B cell (primary cell): ENCODE measurements at regions of chr1 and their contacts with region 1.

Region 1: DNA sequence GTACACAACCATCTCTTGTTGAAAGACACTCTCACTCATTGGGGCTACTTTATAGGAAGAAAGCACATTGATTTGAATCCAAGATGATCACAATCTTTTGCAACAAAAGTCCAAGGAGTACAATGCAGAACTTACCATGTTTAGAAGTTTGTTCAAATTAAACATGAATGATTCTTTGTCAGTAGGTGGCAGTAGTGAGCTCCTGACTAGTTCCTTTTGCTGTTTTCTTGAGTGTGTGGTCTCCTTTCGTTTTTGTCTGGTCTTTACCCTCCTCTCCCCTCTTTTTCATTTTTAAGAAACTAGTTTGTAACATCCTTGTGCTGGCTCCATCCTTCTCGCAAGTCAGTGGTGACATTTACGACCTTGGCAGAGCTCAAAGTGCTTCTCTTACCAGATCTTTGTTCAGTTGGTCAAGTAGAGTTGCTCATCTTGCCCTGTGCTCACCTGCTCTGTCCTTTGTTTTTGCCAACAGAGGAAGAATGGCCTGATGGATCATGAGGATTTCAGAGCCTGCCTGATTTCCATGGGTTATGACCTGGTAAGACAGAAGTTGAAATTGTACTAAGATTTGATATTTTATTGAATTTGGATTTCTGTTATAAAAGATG is 35.7 kb upstream of the MTR start:
- DNase-seq: peak; percentile 59
- ATAC-seq: no peak
- H3K4me3 ChIP-seq: no peak overlapping the region
- H3K4me3 Mint-ChIP-seq: no peak overlapping the region
- H3K27ac ChIP-seq: no peak overlapping the region
- H3K27ac Mint-ChIP-seq: no peak overlapping the region
- H3K4me1 ChIP-seq: no peaks in the 10 kb centered on the region
- H3K4me1 Mint-ChIP-seq: peaks cover 2% of the 10 kb centered on the region
- H3K27me3 ChIP-seq: no peaks in the 10 kb centered on the region
- H3K27me3 Mint-ChIP-seq: peaks cover 3% of the 10 kb centered on the region
- CTCF ChIP-seq: peak; percentile 81

Region 2: DNA sequence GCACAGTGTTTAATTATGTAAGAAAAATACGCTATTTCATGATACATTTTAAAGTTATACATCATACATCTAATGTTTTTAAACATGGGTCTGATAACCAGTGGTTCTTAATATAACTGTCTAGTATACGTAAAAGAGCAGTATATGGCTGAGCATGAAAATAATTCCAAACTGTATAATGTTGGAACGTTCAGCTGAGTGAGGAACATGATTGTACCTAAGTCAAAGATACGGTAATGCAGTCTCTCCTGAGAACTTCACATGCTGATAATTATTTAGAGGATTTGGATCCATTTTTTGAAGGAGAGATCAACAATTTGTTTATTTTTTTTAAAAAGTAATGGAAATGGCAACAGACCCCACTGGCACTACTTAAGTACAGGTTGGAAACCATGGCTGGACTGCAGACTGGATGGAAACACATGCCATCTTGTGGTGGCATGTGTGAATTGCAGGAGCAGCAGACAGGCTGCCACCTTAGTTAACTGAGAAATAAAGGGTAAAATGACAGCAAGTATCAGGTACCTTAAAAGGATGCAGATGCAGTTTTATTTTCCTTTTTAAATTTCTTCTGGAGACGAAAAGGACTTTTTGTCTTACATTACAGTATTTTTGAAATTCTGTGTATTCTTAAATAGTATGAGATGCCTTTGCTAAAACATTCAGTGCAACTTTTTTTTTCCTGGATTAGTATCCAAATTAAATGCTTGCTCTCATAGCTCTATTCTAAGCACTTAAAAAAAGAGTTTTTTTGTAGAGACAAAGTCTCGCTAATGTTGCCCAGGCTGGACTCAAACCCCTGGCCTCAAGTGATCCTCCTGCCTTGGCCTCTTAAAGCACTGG is 109.5 kb after region 1 on chr1:
- CTCF ChIA-PET with region 1: interaction called, 12 read pairs
- POLR2A ChIA-PET with region 1: no interaction called
- intact Hi-C with region 1: loop called (anchors 2 kb)
- DNase-seq: peak; percentile 60
- ATAC-seq: peak; percentile 24
- H3K4me3 ChIP-seq: no peak overlapping the region
- H3K4me3 Mint-ChIP-seq: no peak overlapping the region
- H3K27ac ChIP-seq: no peak overlapping the region
- H3K27ac Mint-ChIP-seq: no peak overlapping the region
- H3K4me1 ChIP-seq: no peaks in the 10 kb centered on the region
- H3K4me1 Mint-ChIP-seq: no peaks in the 10 kb centered on the region
- H3K27me3 ChIP-seq: no peaks in the 10 kb centered on the region
- H3K27me3 Mint-ChIP-seq: no peaks in the 10 kb centered on the region
- CTCF ChIP-seq: peak; percentile 94

Region 3: GRCh38 chr1:237562242-237562823 is 803.0 kb after region 1 on chr1:
- CTCF ChIA-PET with region 1: interaction called, 12 read pairs
- POLR2A ChIA-PET with region 1: no interaction called
- intact Hi-C with region 1: no loop called
- DNase-seq: peak; percentile 50
- ATAC-seq: no peak
- H3K4me3 ChIP-seq: no peak overlapping the region
- H3K4me3 Mint-ChIP-seq: no peak overlapping the region
- H3K27ac ChIP-seq: no peak overlapping the region
- H3K27ac Mint-ChIP-seq: no peak overlapping the region
- H3K4me1 ChIP-seq: no peaks in the 10 kb centered on the region
- H3K4me1 Mint-ChIP-seq: no peaks in the 10 kb centered on the region
- H3K27me3 ChIP-seq: no peaks in the 10 kb centered on the region
- H3K27me3 Mint-ChIP-seq: no peaks in the 10 kb centered on the region
- CTCF ChIP-seq: peak; percentile 84